Activated naive CD4-positive, alpha-beta T cell treated with anti-CD3 and anti-CD28 coated beads, Interleukin-2, amount 10 ng/mL, durations not matched to agents 7 days and 5 days (primary cell): ENCODE measurements at regions of chr2 and their contacts with region 1.

Region 1: GRCh38 chr2:216404010-216404618 is 8.2 kb upstream of the SMARCAL1 start:
- DNase-seq: peak; percentile 58
- H3K4me3 Mint-ChIP-seq: no peak overlapping the region
- H3K27ac Mint-ChIP-seq: no peak overlapping the region
- H3K4me1 Mint-ChIP-seq: no peaks in the 10 kb centered on the region
- H3K27me3 Mint-ChIP-seq: peaks cover 31% of the 10 kb centered on the region

Region 2: GRCh38 chr2:216222650-216223352 is 181.3 kb before region 1 on chr2:
- CTCF ChIA-PET with region 1: interaction called, 32 read pairs
- DNase-seq: no peak
- H3K4me3 Mint-ChIP-seq: no peak overlapping the region
- H3K27ac Mint-ChIP-seq: no peak overlapping the region
- H3K4me1 Mint-ChIP-seq: peaks cover 36% of the 10 kb centered on the region
- H3K27me3 Mint-ChIP-seq: no peaks in the 10 kb centered on the region

Region 3: GRCh38 chr2:216328347-216328746 is 75.8 kb before region 1 on chr2:
- CTCF ChIA-PET with region 1: interaction called, 22 read pairs
- DNase-seq: peak; percentile 39
- H3K4me3 Mint-ChIP-seq: no peak overlapping the region
- H3K27ac Mint-ChIP-seq: no peak overlapping the region
- H3K4me1 Mint-ChIP-seq: no peaks in the 10 kb centered on the region
- H3K27me3 Mint-ChIP-seq: no peaks in the 10 kb centered on the region

Region 4: DNA sequence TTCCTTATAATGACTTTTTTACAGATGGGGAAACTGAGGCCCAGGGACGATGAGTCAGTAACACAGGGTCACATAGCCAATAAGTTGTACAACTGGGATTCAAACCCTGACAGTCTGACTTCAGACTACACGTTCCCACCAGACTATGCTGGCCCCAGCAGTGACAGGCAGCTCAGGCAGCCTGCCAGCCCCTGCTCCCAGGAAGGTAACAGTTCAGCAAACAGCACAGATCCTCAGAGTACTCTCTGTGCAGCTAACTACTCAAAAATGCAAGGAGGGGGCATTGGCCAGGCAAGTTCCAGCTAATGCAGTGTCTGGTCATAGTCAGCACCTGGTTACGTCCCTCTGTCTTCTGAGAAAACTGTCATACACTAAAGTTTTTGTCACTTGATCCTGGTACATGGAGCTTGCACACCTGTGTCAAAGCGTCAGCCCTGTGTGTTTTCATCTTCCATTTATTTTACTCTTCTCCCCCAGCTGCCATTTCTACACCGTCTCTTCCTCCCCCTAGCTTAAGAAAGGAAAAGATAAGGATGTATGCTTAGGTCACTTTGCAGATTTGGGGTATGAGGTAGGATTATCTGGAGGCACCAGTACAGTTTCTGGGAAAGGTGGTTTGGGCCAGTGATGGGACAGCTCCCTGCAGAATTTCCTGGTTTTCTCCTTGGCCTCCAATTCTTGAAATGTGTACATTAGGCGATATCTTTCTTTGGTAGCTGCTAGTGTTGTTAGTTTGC is 12.6 kb after region 1 on chr2:
- CTCF ChIA-PET with region 1: interaction called, 18 read pairs
- DNase-seq: no peak
- H3K4me3 Mint-ChIP-seq: no peak overlapping the region
- H3K27ac Mint-ChIP-seq: no peak overlapping the region
- H3K4me1 Mint-ChIP-seq: peaks cover 25% of the 10 kb centered on the region
- H3K27me3 Mint-ChIP-seq: no peaks in the 10 kb centered on the region